ENCODE measurements at regions of chr7 and their contacts with region 1.

Region 1: GRCh38 chr7:85030893-85031292 is 156.0 kb downstream of the SEMA3D start:
- DNase-seq: peak; percentile 44
- H3K4me3 ChIP-seq: no peak overlapping the region
- H3K27ac ChIP-seq: no peak overlapping the region
- H3K27me3 ChIP-seq: no peaks in the 10 kb centered on the region
- CTCF ChIP-seq: peak; percentile 56

Region 2: GRCh38 chr7:84058311-84059076 is 972.4 kb before region 1 on chr7:
- CTCF ChIA-PET with region 1: no interaction called
- POLR2A ChIA-PET with region 1: no interaction called
- DNase-seq: peak; percentile 20
- H3K4me3 ChIP-seq: no peak overlapping the region
- H3K27ac ChIP-seq: no peak overlapping the region
- H3K27me3 ChIP-seq: no peaks in the 10 kb centered on the region
- CTCF ChIP-seq: no peak

Region 3: GRCh38 chr7:85014936-85015660 is 15.8 kb before region 1 on chr7:
- CTCF ChIA-PET with region 1: no interaction called
- POLR2A ChIA-PET with region 1: no interaction called
- DNase-seq: no peak
- H3K4me3 ChIP-seq: no peak overlapping the region
- H3K27ac ChIP-seq: no peak overlapping the region
- H3K27me3 ChIP-seq: no peaks in the 10 kb centered on the region
- CTCF ChIP-seq: 0 out of 2 replicates have a peak, but pooled peaks have one; percentile 16

Region 4: GRCh38 chr7:85554236-85555178 is 523.6 kb after region 1 on chr7:
- CTCF ChIA-PET with region 1: interaction called, 36 read pairs
- POLR2A ChIA-PET with region 1: no interaction called
- DNase-seq: peak; percentile 62
- H3K4me3 ChIP-seq: no peak overlapping the region
- H3K27ac ChIP-seq: no peak overlapping the region
- H3K27me3 ChIP-seq: no peaks in the 10 kb centered on the region
- CTCF ChIP-seq: peak; percentile 72

Region 5: DNA sequence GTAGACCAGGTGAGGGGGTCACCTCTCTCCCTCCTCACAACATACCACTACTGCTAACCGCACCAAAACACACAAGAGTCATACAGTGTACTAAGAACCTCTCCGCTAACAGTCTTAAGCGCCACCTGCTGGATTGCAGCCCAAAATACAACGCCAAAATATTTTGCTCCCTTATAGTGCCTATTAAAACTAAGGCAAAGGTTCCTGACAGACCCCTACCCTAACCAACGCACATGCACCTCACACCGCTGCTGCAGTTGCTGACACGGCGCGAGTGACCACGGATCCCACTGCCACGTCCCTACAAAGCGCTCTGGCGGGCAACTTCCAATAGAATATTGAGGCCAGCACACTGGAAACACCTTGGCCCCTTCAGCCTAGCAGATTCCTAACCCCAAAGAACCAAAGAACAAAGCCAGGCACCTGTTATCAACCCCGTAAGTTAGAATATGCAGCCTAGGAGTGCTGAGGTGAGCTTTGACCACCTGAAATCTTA is 719.6 kb after region 1 on chr7:
- CTCF ChIA-PET with region 1: interaction called, 22 read pairs
- POLR2A ChIA-PET with region 1: no interaction called
- DNase-seq: no peak
- H3K4me3 ChIP-seq: no peak overlapping the region
- H3K27ac ChIP-seq: no peak overlapping the region
- H3K27me3 ChIP-seq: no peaks in the 10 kb centered on the region
- CTCF ChIP-seq: peak; percentile 92

Region 6: GRCh38 chr7:85829817-85830432 is 799.0 kb after region 1 on chr7:
- CTCF ChIA-PET with region 1: interaction called, 86 read pairs
- POLR2A ChIA-PET with region 1: no interaction called
- DNase-seq: no peak
- H3K4me3 ChIP-seq: no peak overlapping the region
- H3K27ac ChIP-seq: no peak overlapping the region
- H3K27me3 ChIP-seq: no peaks in the 10 kb centered on the region
- CTCF ChIP-seq: peak; percentile 44

Region 7: DNA sequence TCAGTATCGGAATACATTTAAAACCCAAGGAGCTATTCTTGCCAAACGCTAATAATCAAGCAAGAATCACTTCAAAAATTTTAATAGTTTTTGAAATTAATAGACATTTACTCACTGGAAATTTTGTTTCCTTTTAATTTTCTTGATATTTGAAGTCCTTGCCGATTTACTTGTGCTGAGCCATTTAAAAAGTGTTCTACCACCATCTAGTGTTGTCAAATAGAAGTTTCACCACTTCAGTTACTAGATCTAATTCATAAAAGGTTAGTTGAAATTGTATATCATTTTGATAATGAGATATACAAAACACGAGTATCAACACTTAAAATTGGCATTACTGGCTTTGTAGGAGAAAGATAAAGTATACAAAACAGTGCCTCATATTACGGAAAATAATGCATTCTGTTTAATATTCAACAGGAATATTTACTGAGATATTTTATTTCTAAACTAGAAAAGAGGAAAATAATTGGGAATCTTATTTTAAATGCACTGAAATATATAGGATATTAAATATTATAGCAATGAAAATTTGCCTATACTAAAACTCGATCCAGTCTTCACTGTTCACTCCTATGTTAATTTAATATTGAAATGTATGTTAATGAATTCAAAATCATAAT is 820.8 kb after region 1 on chr7:
- CTCF ChIA-PET with region 1: interaction called, 56 read pairs
- POLR2A ChIA-PET with region 1: no interaction called
- DNase-seq: peak; percentile 29
- H3K4me3 ChIP-seq: no peak overlapping the region
- H3K27ac ChIP-seq: no peak overlapping the region
- H3K27me3 ChIP-seq: no peaks in the 10 kb centered on the region
- CTCF ChIP-seq: peak; percentile 56

Measured in AG04450 (cell line).